ENCODE measurements at regions of chr17 and their contacts with region 1.

Region 1: GRCh38 chr17:29389982-29390850 is at the start of gene TAOK1:
- DNase-seq: peak; percentile 99
- H3K4me3 ChIP-seq: peak within 1 kb of the TSS; percentile 83
- H3K27ac ChIP-seq: peak within 1 kb of the TSS; percentile 78
- H3K4me1 ChIP-seq: peaks cover 21% of the 10 kb centered on the region
- CTCF ChIP-seq: no peak
- total RNA-seq, gene TAOK1: 30.4 and 30.5 TPM in 2 replicates

Region 2: DNA sequence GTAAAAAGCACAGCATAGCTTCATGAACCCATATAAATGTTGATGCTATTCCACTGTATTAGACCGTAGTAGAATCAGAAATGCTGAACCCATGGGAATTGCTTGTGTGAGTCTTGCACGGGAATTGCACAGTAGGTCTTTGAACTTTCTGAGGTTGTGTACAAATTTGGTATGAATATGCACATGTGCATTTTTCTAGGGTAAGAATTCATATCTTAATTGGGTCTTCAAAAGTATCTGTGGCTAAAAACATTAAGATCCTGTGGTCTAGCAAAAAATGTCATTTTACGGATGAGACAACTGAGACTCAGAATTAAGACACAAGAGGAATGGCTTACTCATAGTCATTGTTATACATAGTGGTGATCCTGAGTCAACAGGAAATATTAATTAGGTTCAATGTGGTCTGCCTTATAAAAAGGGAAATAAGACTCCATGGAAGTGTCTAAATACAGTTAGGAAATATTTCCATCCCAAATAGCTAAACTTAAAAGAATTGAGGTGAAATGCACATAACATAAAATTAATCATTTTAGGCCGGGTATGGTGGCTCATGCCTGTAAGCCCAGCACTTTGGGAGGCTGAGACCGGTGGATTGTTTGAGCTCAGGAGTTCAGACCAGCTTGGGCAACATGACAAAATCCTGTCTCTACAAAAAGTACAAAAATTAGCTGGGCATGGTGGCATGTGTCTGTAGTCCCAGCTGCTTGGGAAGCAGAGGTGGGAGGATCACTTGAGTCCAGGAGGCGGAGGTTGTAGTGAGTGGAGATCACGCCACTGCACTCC is 22.8 kb after region 1 on chr17:
- CTCF ChIA-PET with region 1: no interaction called
- POLR2A ChIA-PET with region 1: no interaction called
- intact Hi-C with region 1: no loop called
- DNase-seq: no peak
- H3K4me3 ChIP-seq: no peak overlapping the region
- H3K27ac ChIP-seq: no peak overlapping the region
- H3K4me1 ChIP-seq: no peaks in the 10 kb centered on the region
- CTCF ChIP-seq: no peak

Region 3: DNA sequence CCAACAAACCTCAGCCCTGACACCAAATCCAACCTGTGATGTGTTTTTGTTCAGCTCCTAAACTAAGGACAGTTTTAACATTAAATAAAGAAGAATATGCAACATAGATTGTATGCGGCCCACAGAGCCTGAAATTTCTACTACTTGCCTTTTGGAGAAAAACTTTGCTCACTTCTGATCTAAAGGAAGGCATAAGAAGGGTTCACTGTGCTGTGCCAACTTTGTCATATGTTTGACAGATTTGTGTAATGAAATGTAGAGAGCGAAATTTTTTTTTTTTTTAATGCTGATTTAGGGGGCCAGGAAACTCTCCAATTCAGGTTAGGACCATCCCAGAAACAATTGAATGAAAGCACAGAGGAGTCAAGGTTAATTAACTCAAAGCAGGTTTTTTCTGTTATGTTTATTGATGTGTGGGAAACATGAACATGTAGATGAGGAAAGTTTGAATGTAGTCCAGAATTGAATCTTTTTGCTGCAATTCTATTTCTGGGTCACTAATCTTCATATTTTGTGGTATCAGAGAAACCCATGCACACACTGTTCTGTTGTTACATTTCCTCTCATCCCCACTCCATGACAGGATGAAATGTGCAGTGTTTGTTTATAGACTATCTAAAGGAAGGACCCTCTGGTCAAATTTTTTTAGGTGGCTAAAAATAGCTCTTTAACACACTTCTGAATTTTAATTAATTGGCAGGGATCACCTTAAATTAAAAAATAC is 71.4 kb after region 1 on chr17:
- CTCF ChIA-PET with region 1: no interaction called
- POLR2A ChIA-PET with region 1: no interaction called
- intact Hi-C with region 1: loop called (anchors 5 kb)
- DNase-seq: no peak
- H3K4me3 ChIP-seq: no peak overlapping the region
- H3K27ac ChIP-seq: no peak overlapping the region
- H3K4me1 ChIP-seq: peaks cover 10% of the 10 kb centered on the region
- CTCF ChIP-seq: no peak

Measured in OCI-LY7 (cell line).